K562 (cell line): ENCODE measurements at regions of chr9 and their contacts with region 1.

Region 1: GRCh38 chr9:124617471-124618141 is 110.4 kb upstream of the NR5A1 start:
- DNase-seq: peak; percentile 82 to 87 (median 82)
- ATAC-seq: peak; percentile 99
- H3K4me3 ChIP-seq: no peak overlapping the region
- H3K27ac ChIP-seq: no peak overlapping the region
- H3K4me1 ChIP-seq: no peaks in the 10 kb centered on the region; a peak in 3 of 5 replicates
- H3K27me3 ChIP-seq: no peaks in the 10 kb centered on the region
- CTCF ChIP-seq: peak; percentile 93 to 96 (median 94)
- EP300 ChIP-seq: no peak
- POLR2A ChIP-seq: no peak
- RAD21 ChIP-seq: peak; percentile 94 to 97

Region 2: DNA sequence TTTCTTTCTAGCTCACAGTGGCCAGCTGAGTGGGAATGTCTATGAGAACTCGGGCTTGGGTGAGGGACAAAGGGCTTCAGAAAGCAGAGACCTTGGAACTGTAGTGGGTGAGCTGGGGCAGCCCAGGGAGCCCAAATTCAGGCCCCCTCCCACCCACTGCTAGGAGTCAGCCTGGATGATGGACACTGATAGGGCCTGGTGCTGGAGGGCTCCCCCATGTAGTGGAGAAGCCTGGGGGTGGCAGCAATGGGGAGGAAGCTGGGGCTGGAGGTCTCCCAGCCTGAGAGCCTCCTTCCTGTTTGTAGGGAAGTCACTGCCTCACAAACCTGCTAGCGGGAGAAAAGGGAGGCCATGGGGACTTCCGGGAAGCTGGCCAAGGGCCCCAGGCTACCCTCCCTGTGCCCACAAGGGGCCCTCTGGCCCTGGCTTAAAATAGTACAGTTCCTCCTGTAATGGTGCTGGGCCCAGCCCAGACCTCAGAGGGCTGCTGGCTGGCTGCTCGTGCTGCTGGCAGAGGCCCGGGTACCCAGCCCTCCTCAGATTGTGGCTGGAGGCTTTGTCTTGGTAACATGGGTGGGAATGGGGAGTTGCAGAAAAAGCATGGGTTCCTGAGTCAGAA is 104.1 kb before region 1 on chr9:
- CTCF ChIA-PET with region 1: no interaction called
- POLR2A ChIA-PET with region 1: no interaction called
- in situ Hi-C with region 1: no loop called
- intact Hi-C with region 1: no loop called
- DNase-seq: peak; percentile 50 to 71 (median 67)
- ATAC-seq: peak; percentile 35
- H3K4me3 ChIP-seq: no peak overlapping the region
- H3K27ac ChIP-seq: peak overlapping the region; percentile 42; the same call in 2 of the 3 replicates
- H3K4me1 ChIP-seq: peaks cover 30 to 31% of the 10 kb centered on the region in 2 experiments
- H3K27me3 ChIP-seq: no peaks in the 10 kb centered on the region
- CTCF ChIP-seq: no peak
- EP300 ChIP-seq: no peak
- POLR2A ChIP-seq: no peak
- RAD21 ChIP-seq: no peak

Region 3: DNA sequence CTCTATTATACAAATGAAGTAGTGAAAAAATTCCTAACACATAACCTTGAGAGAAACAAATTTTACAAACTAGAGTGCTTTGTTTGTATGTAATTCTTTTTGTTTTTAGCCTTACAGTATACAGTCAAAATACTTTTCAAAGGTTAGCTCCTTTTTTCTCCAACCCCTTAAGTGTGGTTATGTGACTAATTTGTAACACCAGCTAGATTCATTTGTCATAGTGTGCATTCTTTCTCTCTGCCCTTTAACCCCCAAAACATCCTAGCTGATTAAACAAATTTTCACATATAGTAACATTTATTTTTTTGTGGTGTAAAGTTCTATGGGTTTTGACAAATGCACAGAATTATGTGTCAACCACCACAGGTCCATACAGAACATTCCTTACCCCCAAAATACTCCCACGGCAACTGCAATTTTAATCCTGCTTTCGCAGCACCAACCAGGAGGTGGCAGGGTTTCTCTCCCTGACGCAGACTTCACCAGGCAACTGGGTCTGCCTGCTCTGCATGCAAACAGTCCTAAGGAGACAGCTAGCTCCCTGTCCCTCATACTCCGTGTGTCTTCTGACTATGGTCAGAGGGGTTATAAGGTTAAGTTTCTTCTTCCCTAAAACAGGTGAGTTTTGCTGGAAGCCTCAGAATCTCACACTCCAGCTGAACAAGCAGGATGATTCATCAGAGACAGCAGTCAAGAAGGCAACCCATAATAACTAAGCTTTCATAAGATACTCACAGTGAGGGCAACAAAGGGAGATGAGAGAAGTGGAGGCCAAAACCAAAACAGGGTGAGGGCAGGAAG is 65.9 kb before region 1 on chr9:
- CTCF ChIA-PET with region 1: interaction called, 4 read pairs
- POLR2A ChIA-PET with region 1: interaction called, 3 read pairs
- in situ Hi-C with region 1: no loop called
- intact Hi-C with region 1: loop called (anchors 2 kb)
- DNase-seq: peak; percentile 38 to 70 (median 56)
- ATAC-seq: peak; percentile 95
- H3K4me3 ChIP-seq: no peak overlapping the region
- H3K27ac ChIP-seq: no peak overlapping the region
- H3K4me1 ChIP-seq: no peaks in the 10 kb centered on the region
- H3K27me3 ChIP-seq: no peaks in the 10 kb centered on the region
- CTCF ChIP-seq: peak; percentile 77 to 80 (median 80)
- EP300 ChIP-seq: no peak
- POLR2A ChIP-seq: no peak
- RAD21 ChIP-seq: peak; percentile 77 to 84

Region 4: GRCh38 chr9:124652203-124652992 is 34.8 kb after region 1 on chr9:
- CTCF ChIA-PET with region 1: no interaction called
- POLR2A ChIA-PET with region 1: no interaction called
- in situ Hi-C with region 1: no loop called
- intact Hi-C with region 1: no loop called
- DNase-seq: no peak
- ATAC-seq: peak; percentile 52
- H3K4me3 ChIP-seq: no peak overlapping the region
- H3K27ac ChIP-seq: no peak overlapping the region
- H3K4me1 ChIP-seq: peaks cover 0 to 7% of the 10 kb centered on the region in 2 experiments; a peak in 2 of 5 replicates
- H3K27me3 ChIP-seq: no peaks in the 10 kb centered on the region
- CTCF ChIP-seq: no peak
- EP300 ChIP-seq: no peak
- POLR2A ChIP-seq: no peak
- RAD21 ChIP-seq: no peak

Region 5: DNA sequence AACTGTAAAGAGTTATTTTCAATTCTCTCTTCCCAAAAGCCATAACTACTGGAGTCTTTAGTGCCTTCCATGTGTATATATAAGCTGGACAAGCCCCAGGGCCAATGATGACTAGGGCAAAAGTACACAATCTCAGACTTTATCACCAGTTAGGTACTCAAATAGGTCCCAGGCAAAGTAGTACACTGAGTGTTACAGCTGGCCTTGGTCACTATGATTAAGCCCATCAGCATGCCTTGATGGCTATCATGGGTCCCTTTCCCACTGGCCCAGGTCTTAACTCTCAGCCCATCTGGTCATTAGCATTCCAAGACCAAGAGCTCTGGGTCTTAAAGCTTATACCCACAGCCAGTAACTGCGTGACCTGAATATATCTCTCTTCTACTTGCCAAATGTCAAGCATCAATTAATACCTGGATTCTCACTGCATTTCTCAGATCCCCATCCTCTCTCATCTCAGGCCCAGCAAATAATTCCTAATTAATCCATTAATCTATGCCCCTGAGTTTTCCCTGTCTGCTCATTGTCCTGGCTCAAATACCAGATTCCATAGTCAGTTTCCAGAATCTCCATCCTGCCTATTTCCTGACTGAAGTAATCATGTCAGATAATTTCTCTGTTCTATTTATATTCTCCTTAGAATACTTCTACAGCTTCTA is 91.2 kb after region 1 on chr9:
- CTCF ChIA-PET with region 1: interaction called, 147 read pairs
- POLR2A ChIA-PET with region 1: interaction called, 7 read pairs
- in situ Hi-C with region 1: loop called (anchors 5 kb)
- intact Hi-C with region 1: loop called (anchors 1 kb)
- DNase-seq: peak in 1 of 4 experiments; percentile 20
- ATAC-seq: peak; percentile 18; the same call in 2 of the 3 replicates
- H3K4me3 ChIP-seq: no peak overlapping the region
- H3K27ac ChIP-seq: no peak overlapping the region
- H3K4me1 ChIP-seq: peaks cover 0 to 11% of the 10 kb centered on the region in 2 experiments; a peak in 2 of 5 replicates
- H3K27me3 ChIP-seq: no peaks in the 10 kb centered on the region
- CTCF ChIP-seq: no peak
- EP300 ChIP-seq: no peak
- POLR2A ChIP-seq: no peak
- RAD21 ChIP-seq: no peak

Region 6: GRCh38 chr9:124764774-124765438 is 147.3 kb after region 1 on chr9:
- CTCF ChIA-PET with region 1: no interaction called
- POLR2A ChIA-PET with region 1: no interaction called
- in situ Hi-C with region 1: loop called (anchors 5 kb)
- intact Hi-C with region 1: loop called (anchors 2 kb)
- DNase-seq: peak in 3 of 4 experiments; percentile 25 to 55 (median 51)
- ATAC-seq: peak; percentile 69
- H3K4me3 ChIP-seq: no peak overlapping the region
- H3K27ac ChIP-seq: no peak overlapping the region
- H3K4me1 ChIP-seq: peaks cover 2 to 31% of the 10 kb centered on the region in 2 experiments
- H3K27me3 ChIP-seq: no peaks in the 10 kb centered on the region
- CTCF ChIP-seq: peak; percentile 42 to 72 (median 59); a peak in 5 of 6 replicates
- EP300 ChIP-seq: no peak
- POLR2A ChIP-seq: no peak
- RAD21 ChIP-seq: peak; percentile 41 to 70

Region 7: GRCh38 chr9:124839612-124840299 is 222.2 kb after region 1 on chr9:
- CTCF ChIA-PET with region 1: no interaction called
- POLR2A ChIA-PET with region 1: no interaction called
- in situ Hi-C with region 1: loop called (anchors 5 kb)
- intact Hi-C with region 1: no loop called
- DNase-seq: peak in 3 of 4 experiments; percentile 44 to 50 (median 45)
- ATAC-seq: peak; percentile 73
- H3K4me3 ChIP-seq: no peak overlapping the region
- H3K27ac ChIP-seq: no peak overlapping the region
- H3K4me1 ChIP-seq: peaks cover 0 to 27% of the 10 kb centered on the region in 2 experiments; a peak in 3 of 5 replicates
- H3K27me3 ChIP-seq: no peaks in the 10 kb centered on the region
- CTCF ChIP-seq: peak; percentile 26 to 47 (median 45); a peak in 5 of 6 replicates
- EP300 ChIP-seq: no peak
- POLR2A ChIP-seq: no peak
- RAD21 ChIP-seq: peak in 1 of 2 experiments; percentile 6; a peak in 1 of 4 replicates